Pancreas (tissue), 10 donors: ENCODE measurements at regions of chr11 and their contacts with region 1.

Region 1: DNA sequence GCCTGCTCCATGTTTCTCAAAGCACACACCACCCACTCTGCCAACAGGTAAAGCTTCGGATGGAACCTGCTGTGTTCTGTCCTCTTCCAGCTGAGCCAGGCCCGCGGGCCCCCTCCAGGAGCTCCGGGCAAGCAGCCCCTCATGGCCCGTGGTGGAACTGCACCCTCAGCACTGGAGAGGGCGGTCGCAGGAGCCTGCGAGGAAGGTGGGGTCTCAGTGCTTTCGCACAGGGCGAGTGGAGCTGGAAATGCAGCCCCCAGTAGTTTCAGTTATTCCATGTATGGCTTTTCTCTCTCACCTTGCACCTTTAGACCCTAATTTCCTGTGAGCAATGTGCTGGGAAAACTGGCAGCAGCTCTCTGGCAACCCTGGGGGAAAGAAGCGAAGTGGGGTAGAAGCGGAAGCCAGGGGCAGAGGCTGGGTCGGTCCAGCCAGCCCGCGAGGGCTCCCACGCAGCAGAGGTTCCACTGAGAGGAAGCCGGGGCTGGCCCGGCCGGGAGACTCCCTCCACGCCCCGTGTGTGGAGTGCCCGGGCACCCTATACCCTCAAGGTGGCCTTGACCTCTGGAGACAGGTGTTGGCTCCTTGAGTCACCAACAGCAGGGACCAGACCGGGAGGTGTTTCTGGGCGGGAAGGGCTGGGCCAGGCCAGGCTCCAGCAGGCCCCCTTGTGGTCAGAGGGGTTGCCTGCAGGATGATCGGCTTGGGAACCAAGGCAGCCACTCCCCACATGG is 119.9 kb upstream of the TMEM45B start:
- DNase-seq: peak; percentile 53 to 88 (median 78)
- ATAC-seq: peak; percentile 95 to 97 (median 96)
- H3K4me3 ChIP-seq: peak overlapping the region in 2 of 4 donors; percentile 40 to 41
- H3K27ac ChIP-seq: peak overlapping the region in 3 of 4 donors; percentile 24 to 50 (median 39)
- H3K4me1 ChIP-seq: no peaks in the 10 kb centered on the region
- H3K27me3 ChIP-seq: no peaks in the 10 kb centered on the region
- CTCF ChIP-seq: peak; percentile 69 to 84 (median 78)

Region 2: DNA sequence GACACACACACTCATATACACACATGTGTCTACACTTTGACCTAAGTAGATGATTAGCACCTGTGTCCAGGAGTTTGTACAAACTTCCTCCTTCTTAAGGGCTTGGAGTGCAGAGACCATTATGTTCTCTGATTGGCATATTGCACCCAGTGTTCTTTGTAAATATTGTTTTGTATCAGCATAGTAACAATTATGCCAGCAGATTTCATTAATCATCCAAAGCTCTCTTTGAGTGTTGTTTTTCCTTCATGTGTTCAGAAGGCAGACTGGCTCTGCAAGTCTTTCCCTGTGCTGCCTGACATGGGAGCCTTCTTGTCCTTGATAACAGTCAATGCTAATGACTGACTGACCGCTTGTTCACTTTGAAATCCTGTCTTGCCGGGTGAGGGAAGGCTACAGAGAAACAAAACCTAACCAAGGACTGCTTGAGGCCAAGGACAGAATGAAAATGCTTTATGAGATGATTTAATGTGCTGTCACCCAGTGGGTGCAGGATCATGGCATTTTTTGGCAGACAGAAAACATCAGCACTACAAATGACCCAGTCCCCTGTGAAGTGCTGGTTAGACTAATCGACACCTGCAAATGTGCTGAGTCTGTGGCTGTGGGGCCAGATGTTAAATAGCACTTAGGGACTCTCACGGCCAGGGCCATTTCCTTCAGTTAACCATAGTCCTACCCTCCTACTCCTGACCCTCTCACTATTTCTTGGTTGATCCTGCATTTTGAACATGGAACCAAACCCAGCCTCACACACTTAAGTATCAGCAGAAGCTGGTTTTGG is 326.7 kb before region 1 on chr11:
- intact Hi-C with region 1: loop called in 2 of 3 experiments (anchors 5 to 10 kb)
- DNase-seq: peak in 1 of 6 donors; percentile 32
- ATAC-seq: peak; percentile 33 to 57 (median 49)
- H3K4me3 ChIP-seq: no peak overlapping the region
- H3K27ac ChIP-seq: peak overlapping the region in 2 of 4 donors; percentile 47 to 67
- H3K4me1 ChIP-seq: peaks cover 0 to 7% (median 0%) of the 10 kb centered on the region in 3 donors
- H3K27me3 ChIP-seq: peaks cover 0 to 7% (median 2%) of the 10 kb centered on the region in 4 donors
- CTCF ChIP-seq: no peak

Region 3: DNA sequence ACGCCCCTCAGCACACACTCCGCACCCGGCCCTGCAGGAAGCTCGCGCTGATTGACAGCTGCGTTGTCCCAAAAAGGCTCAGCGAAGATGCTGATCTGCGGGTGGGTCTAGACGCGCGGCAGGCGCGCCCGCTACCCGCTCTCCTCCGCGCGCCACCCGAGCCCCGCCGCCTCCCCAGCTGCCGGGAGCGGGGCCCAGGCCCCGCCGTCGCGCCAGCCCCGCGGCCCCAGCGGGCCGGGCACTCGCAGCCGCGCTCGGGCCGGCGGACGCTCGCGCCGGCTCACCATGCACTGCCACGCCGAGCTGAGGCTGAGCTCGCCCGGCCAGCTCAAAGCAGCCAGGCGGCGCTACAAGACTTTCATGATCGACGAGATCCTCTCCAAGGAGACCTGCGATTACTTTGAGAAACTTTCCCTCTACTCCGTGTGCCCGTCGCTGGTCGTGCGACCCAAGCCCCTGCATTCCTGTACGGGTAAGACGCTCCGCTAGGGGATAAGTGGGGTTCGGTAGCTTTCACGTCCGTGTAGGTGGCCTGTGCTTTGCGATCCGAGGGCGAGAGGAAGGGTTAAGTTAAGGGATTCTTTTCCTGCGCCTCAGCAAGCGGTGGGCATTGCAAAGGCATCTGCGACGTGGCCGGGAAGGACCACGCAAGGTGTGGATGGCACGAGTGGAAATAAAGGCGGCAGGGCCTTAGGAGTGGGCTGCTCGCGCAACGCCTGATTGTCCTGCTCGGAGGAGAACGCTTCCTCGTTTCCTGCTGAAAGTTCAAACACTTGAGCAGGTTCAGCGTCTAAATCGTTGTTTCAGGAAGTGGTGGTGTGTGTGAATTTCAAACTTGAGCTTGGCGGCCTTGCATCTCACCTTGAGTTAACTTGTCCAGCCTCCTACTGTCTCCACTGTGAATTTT is 319.7 kb before region 1 on chr11 and contains the start of gene BARX2:
- intact Hi-C with region 1: loop called in 1 of 3 experiments (anchors 10 kb)
- DNase-seq: peak; percentile 49 to 84 (median 60)
- ATAC-seq: peak; percentile 59 to 77 (median 72)
- H3K4me3 ChIP-seq: peak within 1 kb of the TSS; percentile 23 to 55 (median 41)
- H3K27ac ChIP-seq: peak within 1 kb of the TSS; percentile 51 to 79 (median 72)
- H3K4me1 ChIP-seq: no peaks in the 10 kb centered on the region
- H3K27me3 ChIP-seq: peaks cover 0 to 10% (median 7%) of the 10 kb centered on the region in 4 donors
- CTCF ChIP-seq: peak in 1 of 4 donors; percentile 20
- total RNA-seq, gene BARX2: 4.1 to 9.9 (median 5.2) TPM